PC-3 (cell line): ENCODE measurements at regions of chr11 and their contacts with region 1.

Region 1: DNA sequence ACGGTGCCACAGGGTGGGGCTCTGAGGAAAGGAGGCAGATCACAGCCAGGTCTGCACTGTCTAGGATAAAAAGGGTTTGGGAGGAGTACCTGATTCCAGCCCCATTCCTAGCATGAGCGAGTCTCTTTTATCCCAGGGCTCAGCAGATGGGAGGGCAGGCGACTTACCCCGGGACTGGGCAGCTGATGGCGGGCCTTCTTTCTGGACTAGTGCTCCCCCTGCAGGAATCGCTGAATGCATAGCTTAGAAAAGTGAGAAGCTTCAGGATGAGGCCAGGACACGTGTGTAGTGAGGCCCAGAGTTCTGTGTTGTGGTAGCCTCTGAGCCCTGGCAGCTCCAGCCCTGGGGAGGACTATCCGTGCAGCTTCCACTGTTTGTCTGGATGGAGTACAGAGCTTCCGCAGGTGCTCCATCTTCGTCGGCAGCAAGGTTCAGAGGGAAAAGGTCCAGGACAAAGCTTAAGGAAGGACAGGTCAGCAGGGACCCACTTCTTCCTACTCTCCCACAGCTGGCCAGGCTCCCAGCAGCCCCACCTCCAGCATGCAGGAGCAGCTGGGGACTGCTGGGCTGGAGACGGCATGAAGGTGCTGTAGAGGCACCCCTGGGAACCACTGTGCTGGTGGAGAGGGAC is 30.4 kb downstream of the COMMD9 start:
- DNase-seq: peak; percentile 74
- ATAC-seq: peak; percentile 73
- H3K4me3 ChIP-seq: no peak overlapping the region
- H3K27ac ChIP-seq: no peak overlapping the region
- H3K4me1 ChIP-seq: peaks cover 18% of the 10 kb centered on the region
- H3K27me3 ChIP-seq: no peaks in the 10 kb centered on the region
- CTCF ChIP-seq: peak; percentile 77

Region 2: DNA sequence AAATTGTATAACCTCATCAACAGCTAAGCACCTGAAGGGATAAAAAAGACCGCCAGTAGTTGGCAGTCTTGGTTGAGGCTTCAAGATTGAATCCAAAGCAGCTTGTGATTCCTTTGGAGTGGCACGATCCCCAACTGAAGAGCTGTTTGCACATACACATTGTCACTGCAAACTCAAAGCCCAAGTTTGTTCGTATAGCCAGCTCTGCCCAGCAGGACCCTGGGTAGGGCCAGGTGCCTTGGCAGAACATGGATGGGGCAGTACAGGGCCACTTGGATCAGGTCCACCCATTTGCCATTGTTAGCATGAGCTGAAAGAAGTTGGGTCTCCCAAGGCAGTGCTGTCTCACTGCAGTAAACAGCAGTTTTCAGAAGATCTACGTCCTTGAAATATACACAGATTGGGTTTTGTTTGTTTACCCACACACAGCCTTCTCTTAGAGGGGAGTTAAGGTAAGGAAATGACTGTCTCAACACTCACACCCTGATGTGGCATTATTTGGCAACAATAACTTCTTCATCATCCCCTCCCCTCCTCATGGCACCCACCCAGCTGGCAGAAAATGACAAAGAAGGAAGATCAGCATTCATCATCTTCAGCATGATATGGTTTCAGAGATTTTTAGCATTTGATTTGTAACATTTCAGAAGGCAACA is 102.6 kb before region 1 on chr11:
- CTCF ChIA-PET with region 1: interaction called, 9 read pairs
- POLR2A ChIA-PET with region 1: no interaction called
- intact Hi-C with region 1: loop called (anchors 5 kb)
- DNase-seq: peak; percentile 93
- ATAC-seq: peak; percentile 96
- H3K4me3 ChIP-seq: no peak overlapping the region; the same call in 1 of the 2 replicates
- H3K27ac ChIP-seq: peak overlapping the region; percentile 92
- H3K4me1 ChIP-seq: peaks cover 34% of the 10 kb centered on the region
- H3K27me3 ChIP-seq: no peaks in the 10 kb centered on the region
- CTCF ChIP-seq: peak; percentile 31; the same call in 1 of the 2 replicates

Region 3: GRCh38 chr11:36509694-36510566 is 251.1 kb after region 1 on chr11 and contains the start of gene TRAF6:
- CTCF ChIA-PET with region 1: no interaction called
- POLR2A ChIA-PET with region 1: no interaction called
- intact Hi-C with region 1: no loop called
- DNase-seq: peak; percentile 76
- ATAC-seq: peak; percentile 91
- H3K4me3 ChIP-seq: peak within 1 kb of the TSS; percentile 92
- H3K27ac ChIP-seq: peak within 1 kb of the TSS; percentile 38
- H3K4me1 ChIP-seq: peaks cover 11% of the 10 kb centered on the region; the same call in 1 of the 2 replicates
- H3K27me3 ChIP-seq: no peaks in the 10 kb centered on the region
- CTCF ChIP-seq: peak; percentile 83
- total RNA-seq, gene TRAF6: 4.0 and 4.1 TPM in 2 replicates